Activated CD8-positive, alpha-beta T cell treated with anti-CD3 and anti-CD28 coated beads for 36 hours (primary cell): ENCODE measurements at regions of chr4 and their contacts with region 1.

Region 1: GRCh38 chr4:183722731-183723560 is 63.9 kb downstream of the TRAPPC11 start:
- DNase-seq: peak; percentile 62
- ATAC-seq: peak; percentile 53
- H3K4me3 Mint-ChIP-seq: peak overlapping the region; percentile 62
- H3K27ac Mint-ChIP-seq: peak overlapping the region; percentile 46
- H3K4me1 Mint-ChIP-seq: peaks cover 12% of the 10 kb centered on the region
- H3K27me3 Mint-ChIP-seq: peaks cover 7% of the 10 kb centered on the region
- CTCF ChIP-seq: no peak

Region 2: DNA sequence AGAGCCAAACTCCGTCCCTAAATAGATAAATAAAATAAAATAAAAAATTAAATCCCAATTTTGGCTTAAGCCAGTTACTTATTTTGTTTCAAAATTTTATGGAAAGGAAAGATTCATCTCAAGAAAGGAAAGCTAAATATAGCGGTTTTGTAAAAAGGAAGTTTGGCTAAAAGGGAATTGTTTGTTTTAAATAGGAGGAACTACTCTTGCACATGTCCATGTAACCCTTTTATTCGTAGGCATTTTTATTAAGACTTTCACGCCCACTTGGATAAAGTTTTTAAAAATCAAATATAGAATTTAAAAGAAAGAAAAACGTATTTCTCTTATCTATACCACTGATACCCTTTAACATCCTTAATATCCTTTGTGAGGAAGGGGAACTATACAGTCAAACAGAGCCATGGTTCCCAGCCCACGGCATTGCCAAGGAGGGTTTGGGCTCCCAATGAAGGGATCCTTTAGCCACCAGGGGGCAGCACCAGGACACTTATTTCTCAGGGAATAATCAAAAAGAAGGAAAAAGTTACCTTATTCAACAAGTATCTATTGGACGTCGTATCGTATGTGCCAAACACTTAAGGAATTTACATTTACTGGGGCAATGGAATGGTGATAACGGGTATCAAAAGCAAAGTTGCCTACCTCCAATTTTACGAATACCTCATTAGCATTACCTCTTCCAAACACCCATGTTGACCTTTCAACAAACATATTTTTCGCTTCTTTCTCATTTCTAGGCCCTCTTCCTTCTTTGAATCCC is 250.8 kb before region 1 on chr4:
- CTCF ChIA-PET with region 1: interaction called, 6 read pairs
- POLR2A ChIA-PET with region 1: no interaction called
- intact Hi-C with region 1: loop called (anchors 10 kb)
- DNase-seq: peak; percentile 94
- ATAC-seq: peak; percentile 82
- H3K4me3 Mint-ChIP-seq: no peak overlapping the region
- H3K27ac Mint-ChIP-seq: no peak overlapping the region
- H3K4me1 Mint-ChIP-seq: peaks cover 4% of the 10 kb centered on the region
- H3K27me3 Mint-ChIP-seq: no peaks in the 10 kb centered on the region
- CTCF ChIP-seq: peak; percentile 84

Region 3: GRCh38 chr4:183876268-183876934 is 153.5 kb after region 1 on chr4:
- CTCF ChIA-PET with region 1: no interaction called
- POLR2A ChIA-PET with region 1: no interaction called
- intact Hi-C with region 1: no loop called
- DNase-seq: no peak
- ATAC-seq: no peak
- H3K4me3 Mint-ChIP-seq: no peak overlapping the region
- H3K27ac Mint-ChIP-seq: no peak overlapping the region
- H3K4me1 Mint-ChIP-seq: no peaks in the 10 kb centered on the region
- H3K27me3 Mint-ChIP-seq: no peaks in the 10 kb centered on the region
- CTCF ChIP-seq: no peak